K562 (cell line): ENCODE measurements at regions of chr3 and their contacts with region 1.

Region 1: GRCh38 chr3:17841190-17841828 is 98.9 kb upstream of the TBC1D5 start:
- DNase-seq: peak; percentile 81 to 87 (median 84)
- ATAC-seq: peak; percentile 99
- H3K4me3 ChIP-seq: no peak overlapping the region
- H3K27ac ChIP-seq: no peak overlapping the region
- H3K4me1 ChIP-seq: no peaks in the 10 kb centered on the region
- H3K27me3 ChIP-seq: peaks cover 0 to 5% of the 10 kb centered on the region in 2 experiments; a peak in 3 of 5 replicates
- CTCF ChIP-seq: peak; percentile 98 to 99 (median 99)
- EP300 ChIP-seq: peak; percentile 19; the same call in 1 of the 2 replicates
- POLR2A ChIP-seq: no peak
- RAD21 ChIP-seq: peak; percentile 99

Region 2: GRCh38 chr3:17645072-17645698 is 196.1 kb before region 1 on chr3:
- CTCF ChIA-PET with region 1: interaction called, 7 read pairs
- POLR2A ChIA-PET with region 1: no interaction called
- in situ Hi-C with region 1: loop called (anchors 25 kb)
- intact Hi-C with region 1: loop called (anchors 1 kb)
- DNase-seq: peak; percentile 17 to 75 (median 36)
- ATAC-seq: peak; percentile 93
- H3K4me3 ChIP-seq: no peak overlapping the region
- H3K27ac ChIP-seq: no peak overlapping the region
- H3K4me1 ChIP-seq: no peaks in the 10 kb centered on the region
- H3K27me3 ChIP-seq: no peaks in the 10 kb centered on the region
- CTCF ChIP-seq: peak; percentile 64 to 85 (median 74); a peak in 5 of 6 replicates
- EP300 ChIP-seq: no peak
- POLR2A ChIP-seq: no peak
- RAD21 ChIP-seq: peak; percentile 74 to 87